CD4-positive, alpha-beta T cell (primary cell): ENCODE measurements at regions of chr3 and their contacts with region 1.

Region 1: GRCh38 chr3:129120254-129121004 is 1.2 kb downstream of the RAB43 start:
- DNase-seq: peak; percentile 78 to 98 (median 87)
- ATAC-seq: peak; percentile 61
- H3K4me3 ChIP-seq: peak overlapping the region; percentile 93
- H3K4me3 Mint-ChIP-seq: peak overlapping the region; percentile 95
- H3K27ac ChIP-seq: peak overlapping the region; percentile 82 to 90
- H3K27ac Mint-ChIP-seq: peak overlapping the region; percentile 89
- H3K4me1 ChIP-seq: peaks cover 68% of the 10 kb centered on the region
- H3K4me1 Mint-ChIP-seq: peaks cover 51% of the 10 kb centered on the region
- H3K27me3 ChIP-seq: no peaks in the 10 kb centered on the region
- H3K27me3 Mint-ChIP-seq: no peaks in the 10 kb centered on the region
- CTCF ChIP-seq: peak; percentile 36

Region 2: DNA sequence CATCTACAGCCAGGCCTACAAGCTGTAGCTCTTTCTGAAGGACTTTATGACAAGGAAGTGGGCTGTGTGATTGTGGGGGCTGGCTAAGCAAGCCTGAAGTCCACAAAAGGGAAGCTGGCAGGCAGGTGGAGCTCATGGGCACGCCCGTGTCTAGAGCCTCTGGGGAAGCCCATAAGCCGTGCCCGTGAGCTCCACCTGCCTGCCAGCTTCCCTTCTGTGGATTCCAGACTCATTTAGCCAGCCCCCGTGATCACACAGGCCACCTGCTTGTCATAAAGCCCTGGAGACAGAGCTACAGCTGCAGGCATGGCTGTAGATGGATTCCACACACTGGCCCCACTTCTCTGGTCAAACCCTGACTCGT is 104.1 kb before region 1 on chr3:
- CTCF ChIA-PET with region 1: interaction called, 3 read pairs
- POLR2A ChIA-PET with region 1: interaction called, 66 read pairs
- intact Hi-C with region 1: no loop called
- DNase-seq: peak; percentile 42 to 88 (median 64)
- ATAC-seq: peak; percentile 86
- H3K4me3 ChIP-seq: peak overlapping the region; percentile 37
- H3K4me3 Mint-ChIP-seq: peak overlapping the region; percentile 89
- H3K27ac ChIP-seq: peak overlapping the region; percentile 79 to 82
- H3K27ac Mint-ChIP-seq: peak overlapping the region; percentile 80
- H3K4me1 ChIP-seq: peaks cover 46% of the 10 kb centered on the region
- H3K4me1 Mint-ChIP-seq: peaks cover 45% of the 10 kb centered on the region
- H3K27me3 ChIP-seq: no peaks in the 10 kb centered on the region
- H3K27me3 Mint-ChIP-seq: no peaks in the 10 kb centered on the region
- CTCF ChIP-seq: peak; percentile 26

Region 3: DNA sequence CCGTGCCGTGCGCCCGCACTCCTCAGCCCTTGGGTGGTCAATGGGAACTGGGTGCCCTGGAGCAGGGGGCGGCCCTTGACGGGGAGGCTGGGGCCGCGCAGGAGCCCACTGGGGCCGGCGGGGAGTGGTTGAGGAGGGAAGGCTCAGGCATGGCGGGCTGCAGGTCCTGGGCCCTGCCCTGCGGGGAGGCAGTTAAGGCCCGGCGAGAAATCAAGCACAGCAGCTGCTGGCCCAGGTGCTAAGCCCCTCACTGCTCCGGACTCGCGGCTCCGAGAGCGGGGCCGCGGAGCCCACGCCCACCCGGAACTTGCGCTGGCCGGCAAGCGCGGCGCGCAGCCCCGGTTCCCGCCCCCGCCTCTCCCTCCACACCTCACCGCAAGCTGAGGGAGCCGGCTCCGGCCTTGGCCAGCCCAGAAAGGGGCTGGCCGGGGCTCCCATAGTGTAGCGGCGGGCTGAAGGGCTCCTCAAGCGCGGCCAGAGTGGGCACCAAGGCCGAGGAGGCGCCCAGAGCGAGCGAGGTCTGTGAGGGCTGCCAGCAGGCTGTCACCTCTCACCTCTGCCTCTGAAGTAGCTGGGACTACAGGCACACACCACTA is 52.0 kb before region 1 on chr3:
- CTCF ChIA-PET with region 1: no interaction called
- POLR2A ChIA-PET with region 1: interaction called, 47 read pairs
- intact Hi-C with region 1: no loop called
- DNase-seq: peak in 2 of 14 experiments; percentile 8 to 29
- ATAC-seq: peak; percentile 50
- H3K4me3 ChIP-seq: peak overlapping the region; percentile 36
- H3K4me3 Mint-ChIP-seq: peak overlapping the region; percentile 85
- H3K27ac ChIP-seq: no peak overlapping the region
- H3K27ac Mint-ChIP-seq: no peak overlapping the region
- H3K4me1 ChIP-seq: peaks cover 5% of the 10 kb centered on the region
- H3K4me1 Mint-ChIP-seq: peaks cover 11% of the 10 kb centered on the region
- H3K27me3 ChIP-seq: no peaks in the 10 kb centered on the region
- H3K27me3 Mint-ChIP-seq: peaks cover 14% of the 10 kb centered on the region
- CTCF ChIP-seq: no peak

Region 4: DNA sequence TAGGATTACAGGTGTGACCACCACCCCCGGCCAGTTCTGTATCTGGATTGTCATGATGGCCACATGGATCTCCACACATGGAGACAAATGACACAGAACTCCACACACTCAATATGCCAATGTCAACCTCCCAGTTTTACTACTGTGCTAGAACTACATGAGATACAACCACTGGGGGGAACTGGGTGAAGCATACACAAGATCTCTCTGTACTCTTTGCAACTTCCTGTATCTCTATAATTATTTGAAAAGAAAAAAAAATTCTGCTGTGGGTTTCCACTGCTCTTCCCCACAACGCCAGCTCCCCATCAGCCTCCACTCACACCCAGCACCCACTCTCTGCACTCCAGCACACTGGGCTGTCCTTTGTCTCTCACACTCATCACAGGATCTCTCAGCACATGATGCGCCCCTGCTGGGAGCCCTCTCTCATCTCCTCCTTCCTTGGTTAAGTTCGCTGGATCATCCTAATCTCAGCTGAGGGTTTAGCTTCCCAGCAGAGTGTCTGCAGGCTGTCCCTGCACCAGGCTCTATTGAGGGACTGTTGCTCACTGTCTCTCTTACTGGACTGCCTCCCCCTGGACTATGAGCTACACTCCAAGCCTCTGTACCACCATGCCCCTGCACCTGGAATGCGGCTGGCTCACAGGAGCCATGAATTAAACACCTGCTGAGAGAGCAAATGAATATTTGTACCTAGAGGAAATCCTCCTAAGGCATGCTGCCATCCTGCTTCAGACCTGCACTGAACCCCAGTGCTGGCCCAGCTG is 11.9 kb after region 1 on chr3:
- CTCF ChIA-PET with region 1: interaction called, 5 read pairs
- POLR2A ChIA-PET with region 1: interaction called, 47 read pairs
- intact Hi-C with region 1: no loop called
- DNase-seq: no peak
- ATAC-seq: peak; percentile 62
- H3K4me3 ChIP-seq: no peak overlapping the region
- H3K4me3 Mint-ChIP-seq: no peak overlapping the region
- H3K27ac ChIP-seq: no peak overlapping the region
- H3K27ac Mint-ChIP-seq: peak overlapping the region; percentile 43
- H3K4me1 ChIP-seq: peaks cover 3% of the 10 kb centered on the region
- H3K4me1 Mint-ChIP-seq: peaks cover 21% of the 10 kb centered on the region
- H3K27me3 ChIP-seq: no peaks in the 10 kb centered on the region
- H3K27me3 Mint-ChIP-seq: no peaks in the 10 kb centered on the region
- CTCF ChIP-seq: no peak

Region 5: DNA sequence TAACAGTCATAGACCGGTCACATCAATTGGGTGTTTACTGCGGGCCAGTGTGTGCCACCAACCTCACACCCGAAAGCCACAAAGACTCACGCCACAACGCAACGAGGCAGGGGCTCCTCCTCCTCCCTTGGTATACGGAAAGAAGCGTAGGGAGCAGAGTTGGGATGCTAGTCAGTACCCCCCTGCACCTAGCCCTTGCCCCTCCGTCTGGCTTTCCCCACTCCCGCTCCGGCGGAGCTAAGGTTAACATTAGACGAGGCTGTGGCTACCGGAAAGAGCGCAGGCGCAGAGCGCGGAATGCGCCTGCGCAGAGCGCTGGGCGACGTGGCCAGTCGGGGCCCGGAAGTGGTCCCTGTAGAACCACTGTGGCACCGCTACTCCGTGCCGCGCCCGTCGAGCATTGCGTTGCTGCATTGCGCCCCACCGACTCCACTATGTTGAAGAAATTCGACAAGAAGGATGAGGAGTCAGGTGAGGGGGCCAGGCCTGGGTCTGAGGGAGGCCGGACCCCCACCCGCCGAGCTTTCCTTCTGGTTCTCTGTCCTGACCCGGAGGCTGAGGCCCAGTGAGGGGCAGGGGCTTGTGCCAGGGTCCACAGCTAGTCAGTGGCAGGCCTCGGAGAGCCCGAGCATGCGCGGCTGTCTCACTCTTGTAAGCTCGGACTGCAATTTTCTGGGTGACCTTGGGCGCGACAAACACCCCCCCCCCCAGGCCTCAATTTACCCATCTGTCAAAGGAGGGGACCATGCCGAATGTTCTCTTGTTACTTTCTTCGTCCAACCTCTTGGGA is 129.0 kb after region 1 on chr3 and contains the start of gene COPG1:
- CTCF ChIA-PET with region 1: interaction called, 7 read pairs
- POLR2A ChIA-PET with region 1: interaction called, 8 read pairs
- intact Hi-C with region 1: loop called in 1 of 2 experiments (anchors 5 kb)
- DNase-seq: peak; percentile 72 to 94 (median 86)
- ATAC-seq: peak; percentile 85
- H3K4me3 ChIP-seq: peak within 1 kb of the TSS; percentile 100
- H3K4me3 Mint-ChIP-seq: peak within 1 kb of the TSS; percentile 98
- H3K27ac ChIP-seq: peak within 1 kb of the TSS; percentile 79 to 88
- H3K27ac Mint-ChIP-seq: peak within 1 kb of the TSS; percentile 97
- H3K4me1 ChIP-seq: peaks cover 47% of the 10 kb centered on the region
- H3K4me1 Mint-ChIP-seq: peaks cover 55% of the 10 kb centered on the region
- H3K27me3 ChIP-seq: no peaks in the 10 kb centered on the region
- H3K27me3 Mint-ChIP-seq: no peaks in the 10 kb centered on the region
- CTCF ChIP-seq: no peak
- total RNA-seq, gene COPG1: 77.7 to 79.3 TPM